H1 (cell line): ENCODE measurements at regions of chr1 and their contacts with region 1.

Region 1: GRCh38 chr1:2044510-2045319 is 5.5 kb upstream of the PRKCZ start:
- DNase-seq: peak in 1 of 2 experiments; percentile 92
- H3K4me3 ChIP-seq: peak overlapping the region in 2 of 4 experiments; percentile 2 to 52; a peak in 3 of 8 replicates
- H3K27ac ChIP-seq: no peak overlapping the region
- H3K4me1 ChIP-seq: peaks cover 0 to 26% (median 19%) of the 10 kb centered on the region in 4 experiments; a peak in 6 of 7 replicates
- H3K27me3 ChIP-seq: peaks cover 0 to 7% (median 0%) of the 10 kb centered on the region in 4 experiments; a peak in 3 of 7 replicates
- CTCF ChIP-seq: peak in 2 of 3 experiments; percentile 77 to 90; a peak in 3 of 4 replicates
- EP300 ChIP-seq: no peak
- POLR2A ChIP-seq: no peak
- RAD21 ChIP-seq: peak; percentile 58 to 80

Region 2: GRCh38 chr1:1906185-1907097 is 138.3 kb before region 1 on chr1:
- CTCF ChIA-PET with region 1: interaction called, 74 read pairs
- POLR2A ChIA-PET with region 1: interaction called, 3 read pairs
- DNase-seq: peak in 1 of 2 experiments; percentile 89
- H3K4me3 ChIP-seq: no peak overlapping the region
- H3K27ac ChIP-seq: no peak overlapping the region
- H3K4me1 ChIP-seq: peaks cover 0 to 10% (median 5%) of the 10 kb centered on the region in 4 experiments; a peak in 5 of 7 replicates
- H3K27me3 ChIP-seq: no peaks in the 10 kb centered on the region; a peak in 1 of 7 replicates
- CTCF ChIP-seq: peak in 2 of 3 experiments; percentile 93 to 99; a peak in 3 of 4 replicates
- EP300 ChIP-seq: no peak
- POLR2A ChIP-seq: no peak
- RAD21 ChIP-seq: peak; percentile 96 to 97

Region 3: GRCh38 chr1:1973716-1974642 is 70.7 kb before region 1 on chr1:
- CTCF ChIA-PET with region 1: interaction called, 249 read pairs
- POLR2A ChIA-PET with region 1: no interaction called
- DNase-seq: no peak
- H3K4me3 ChIP-seq: no peak overlapping the region
- H3K27ac ChIP-seq: no peak overlapping the region
- H3K4me1 ChIP-seq: no peaks in the 10 kb centered on the region
- H3K27me3 ChIP-seq: no peaks in the 10 kb centered on the region
- CTCF ChIP-seq: no peak
- EP300 ChIP-seq: no peak
- POLR2A ChIP-seq: no peak
- RAD21 ChIP-seq: no peak

Region 4: GRCh38 chr1:2003278-2004131 is 41.2 kb before region 1 on chr1 and contains the start of gene CFAP74:
- CTCF ChIA-PET with region 1: interaction called, 12 read pairs
- POLR2A ChIA-PET with region 1: no interaction called
- DNase-seq: peak; percentile 56 to 96
- H3K4me3 ChIP-seq: peak within 1 kb of the TSS; percentile 19 to 62 (median 34)
- H3K27ac ChIP-seq: no peak within 1 kb of the TSS
- H3K4me1 ChIP-seq: peaks cover 0 to 2% (median 0%) of the 10 kb centered on the region in 4 experiments; a peak in 3 of 7 replicates
- H3K27me3 ChIP-seq: peaks cover 0 to 2% (median 0%) of the 10 kb centered on the region in 4 experiments; a peak in 3 of 7 replicates
- CTCF ChIP-seq: no peak
- EP300 ChIP-seq: peak in 1 of 2 experiments; percentile 100; a peak in 2 of 3 replicates
- POLR2A ChIP-seq: no peak
- RAD21 ChIP-seq: no peak
- total RNA-seq, gene CFAP74: 0.20 and 0.33 TPM in 2 replicates

Region 5: DNA sequence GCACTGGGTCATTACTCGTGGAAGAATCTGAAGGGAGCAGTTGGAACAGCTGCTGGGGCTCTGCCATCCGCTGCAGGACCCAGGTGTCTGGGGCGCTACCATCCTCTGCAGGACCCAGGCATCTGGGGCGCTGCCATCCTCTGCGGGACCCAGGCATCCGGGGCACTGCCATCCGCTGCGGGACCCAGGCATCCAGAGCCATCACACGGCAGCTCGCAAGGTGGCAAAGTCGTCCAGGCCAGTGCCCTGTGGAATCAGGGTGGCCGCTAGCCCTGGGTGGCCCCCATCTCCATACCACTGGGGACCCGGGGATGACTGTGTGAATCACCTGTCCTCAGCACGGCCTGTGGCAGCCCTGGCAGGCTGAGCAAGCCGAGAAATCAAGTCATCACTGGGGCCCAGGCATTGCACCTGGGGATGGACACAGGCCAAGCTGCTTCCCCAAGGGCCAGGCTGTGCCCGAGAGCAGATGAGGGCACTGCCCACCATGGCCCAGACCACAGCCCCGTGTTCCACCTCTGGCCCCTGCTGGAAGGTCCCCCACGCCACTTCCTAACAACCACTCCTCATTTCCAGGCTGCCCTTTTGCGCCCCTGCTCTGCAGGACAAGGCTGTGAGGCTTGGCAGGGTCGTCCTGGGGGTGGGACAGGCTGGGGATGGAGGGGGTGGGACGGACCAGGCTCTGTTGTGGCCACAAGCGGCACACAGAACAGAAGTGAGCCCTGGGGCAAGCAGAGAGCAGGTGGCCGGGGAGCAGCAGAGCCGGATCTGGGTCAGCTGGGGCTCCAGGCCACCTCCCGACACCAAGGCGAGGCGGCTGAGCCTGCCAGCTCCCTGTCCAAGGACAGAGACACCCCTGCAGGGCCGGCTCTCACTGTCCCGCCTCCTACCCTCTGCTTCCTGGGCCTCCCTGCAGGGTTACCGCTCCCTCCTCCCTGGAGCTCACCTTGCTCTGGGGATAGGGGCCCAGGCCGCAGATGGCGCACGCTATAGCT is 12.9 kb before region 1 on chr1:
- CTCF ChIA-PET with region 1: interaction called, 92 read pairs
- POLR2A ChIA-PET with region 1: interaction called, 6 read pairs
- DNase-seq: no peak
- H3K4me3 ChIP-seq: no peak overlapping the region
- H3K27ac ChIP-seq: no peak overlapping the region
- H3K4me1 ChIP-seq: peaks cover 0 to 10% (median 4%) of the 10 kb centered on the region in 4 experiments; a peak in 3 of 7 replicates
- H3K27me3 ChIP-seq: no peaks in the 10 kb centered on the region
- CTCF ChIP-seq: no peak
- EP300 ChIP-seq: no peak
- POLR2A ChIP-seq: no peak
- RAD21 ChIP-seq: no peak